B cell (primary cell): ENCODE measurements at regions of chr1 and their contacts with region 1.

Region 1: DNA sequence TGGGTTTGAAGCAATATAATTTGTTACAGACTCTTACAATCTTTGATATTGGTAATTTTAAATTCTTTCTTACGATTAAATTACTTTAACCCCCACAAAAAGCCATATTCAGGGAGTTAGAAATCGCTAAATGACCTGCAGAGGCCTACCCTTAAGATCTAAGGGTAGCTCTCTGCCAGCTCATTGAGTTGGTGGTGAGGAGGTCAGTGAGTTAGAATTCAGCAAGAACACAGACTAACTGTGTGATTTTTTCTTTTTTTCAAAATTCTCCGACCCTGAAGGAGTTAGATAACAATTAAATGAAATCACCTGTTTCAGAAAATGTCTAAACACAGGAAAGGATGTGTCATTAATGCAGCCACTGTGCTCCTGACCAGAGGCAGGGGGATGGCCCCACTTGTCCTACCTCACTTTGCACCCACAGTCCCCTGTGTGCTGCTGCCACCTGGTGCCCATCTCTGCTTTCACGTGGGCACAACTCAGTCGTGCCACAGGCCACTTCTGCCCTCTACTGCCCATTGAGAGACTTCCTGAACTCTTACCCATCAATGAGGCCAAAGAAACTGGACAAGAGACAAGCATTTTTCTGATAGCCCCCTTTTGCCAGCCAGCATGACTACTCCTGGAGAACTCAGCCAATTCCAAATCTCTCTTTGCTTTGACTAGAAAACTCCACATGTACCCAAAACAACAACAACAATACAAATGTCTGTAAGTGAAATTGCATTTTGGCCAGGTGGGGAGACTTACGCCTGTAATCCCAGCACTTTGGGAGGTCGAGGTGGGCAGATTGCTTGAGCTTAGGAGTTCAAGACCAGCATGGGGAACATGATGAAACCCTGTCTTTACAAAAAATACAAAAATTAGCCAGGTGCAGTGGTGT is 8.4 kb downstream of the CFAP45 start:
- DNase-seq: peak; percentile 81
- ATAC-seq: peak; percentile 86
- H3K4me3 ChIP-seq: no peak overlapping the region
- H3K4me3 Mint-ChIP-seq: no peak overlapping the region
- H3K27ac ChIP-seq: no peak overlapping the region
- H3K27ac Mint-ChIP-seq: peak overlapping the region; percentile 70
- H3K4me1 ChIP-seq: peaks cover 18 to 19% of the 10 kb centered on the region in 2 donors
- H3K4me1 Mint-ChIP-seq: peaks cover 26% of the 10 kb centered on the region
- H3K27me3 ChIP-seq: peaks cover 0 to 6% (median 0%) of the 10 kb centered on the region in 4 experiments
- H3K27me3 Mint-ChIP-seq: peaks cover 6% of the 10 kb centered on the region
- CTCF ChIP-seq: peak; percentile 78

Region 2: DNA sequence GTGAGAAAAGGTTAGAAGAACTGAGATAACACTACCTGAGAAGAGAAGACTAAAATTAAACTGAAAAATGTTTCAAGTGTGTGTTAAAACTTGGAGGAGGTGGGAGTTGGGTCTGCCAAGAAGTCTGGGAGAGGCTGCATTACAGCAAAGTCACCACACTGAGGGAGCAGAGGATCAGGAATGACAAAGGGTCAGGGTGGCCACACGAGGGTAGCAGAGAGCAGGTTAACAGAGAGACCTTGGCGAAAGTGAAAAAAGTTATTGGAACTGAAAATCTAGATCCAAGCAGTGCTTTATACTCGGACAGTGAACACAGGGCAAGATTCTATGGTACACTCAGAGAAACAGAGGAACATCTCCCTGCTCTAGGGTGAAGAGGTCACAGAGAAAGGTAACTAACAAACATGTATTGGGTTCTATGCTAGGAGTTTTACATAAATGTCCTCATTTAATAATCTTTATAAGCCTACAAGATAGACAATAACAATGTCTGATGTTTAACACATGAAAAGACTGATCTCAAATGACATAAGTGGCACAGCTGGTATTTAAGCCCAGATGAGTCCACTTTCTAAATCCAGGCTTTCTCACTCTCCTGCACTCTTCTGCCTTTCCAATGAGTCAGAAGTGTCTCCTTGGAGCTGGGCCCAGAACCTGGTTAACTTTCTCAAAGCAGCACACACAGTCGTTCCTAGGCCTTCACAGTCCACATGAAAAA is 730.4 kb before region 1 on chr1:
- CTCF ChIA-PET with region 1: interaction called, 4 read pairs
- POLR2A ChIA-PET with region 1: no interaction called
- intact Hi-C with region 1: loop called (anchors 2 kb)
- DNase-seq: peak; percentile 82
- ATAC-seq: peak; percentile 98
- H3K4me3 ChIP-seq: no peak overlapping the region
- H3K4me3 Mint-ChIP-seq: no peak overlapping the region
- H3K27ac ChIP-seq: no peak overlapping the region
- H3K27ac Mint-ChIP-seq: no peak overlapping the region
- H3K4me1 ChIP-seq: peaks cover 4 to 6% of the 10 kb centered on the region in 2 donors
- H3K4me1 Mint-ChIP-seq: peaks cover 7% of the 10 kb centered on the region
- H3K27me3 ChIP-seq: no peaks in the 10 kb centered on the region
- H3K27me3 Mint-ChIP-seq: no peaks in the 10 kb centered on the region
- CTCF ChIP-seq: peak; percentile 96

Region 3: GRCh38 chr1:159780583-159781582 is 110.6 kb before region 1 on chr1 and contains the start of gene DUSP23:
- CTCF ChIA-PET with region 1: interaction called, 10 read pairs
- POLR2A ChIA-PET with region 1: interaction called, 6 read pairs
- intact Hi-C with region 1: loop called (anchors 1 kb)
- DNase-seq: peak; percentile 96
- ATAC-seq: peak; percentile 97
- H3K4me3 ChIP-seq: peak within 1 kb of the TSS; percentile 65 to 74 (median 71)
- H3K4me3 Mint-ChIP-seq: peak within 1 kb of the TSS; percentile 92
- H3K27ac ChIP-seq: peak within 1 kb of the TSS in 1 of 2 donors; percentile 53
- H3K27ac Mint-ChIP-seq: peak within 1 kb of the TSS; percentile 90
- H3K4me1 ChIP-seq: peaks cover 13 to 15% of the 10 kb centered on the region in 2 donors
- H3K4me1 Mint-ChIP-seq: peaks cover 9% of the 10 kb centered on the region
- H3K27me3 ChIP-seq: peaks cover 0 to 4% (median 0%) of the 10 kb centered on the region in 4 experiments
- H3K27me3 Mint-ChIP-seq: peaks cover 2% of the 10 kb centered on the region
- CTCF ChIP-seq: peak; percentile 78
- total RNA-seq, gene DUSP23: 9.5 and 9.6 TPM in 2 replicates

Region 4: GRCh38 chr1:159804924-159805323 is 86.6 kb before region 1 on chr1:
- CTCF ChIA-PET with region 1: interaction called, 211 read pairs
- POLR2A ChIA-PET with region 1: no interaction called
- intact Hi-C with region 1: no loop called
- DNase-seq: no peak
- ATAC-seq: no peak
- H3K4me3 ChIP-seq: no peak overlapping the region
- H3K4me3 Mint-ChIP-seq: no peak overlapping the region
- H3K27ac ChIP-seq: no peak overlapping the region
- H3K27ac Mint-ChIP-seq: no peak overlapping the region
- H3K4me1 ChIP-seq: peaks cover 0 to 6% of the 10 kb centered on the region in 2 donors
- H3K4me1 Mint-ChIP-seq: peaks cover 7% of the 10 kb centered on the region
- H3K27me3 ChIP-seq: peaks cover 0 to 31% (median 15%) of the 10 kb centered on the region in 4 experiments
- H3K27me3 Mint-ChIP-seq: peaks cover 75% of the 10 kb centered on the region
- CTCF ChIP-seq: no peak

Region 5: GRCh38 chr1:159854693-159855192 is 36.8 kb before region 1 on chr1:
- CTCF ChIA-PET with region 1: interaction called, 5 read pairs
- POLR2A ChIA-PET with region 1: no interaction called
- intact Hi-C with region 1: loop called (anchors 2 kb)
- DNase-seq: peak; percentile 75
- ATAC-seq: peak; percentile 93
- H3K4me3 ChIP-seq: peak overlapping the region in 4 of 5 experiments; percentile 38 to 64 (median 56)
- H3K4me3 Mint-ChIP-seq: peak overlapping the region; percentile 70
- H3K27ac ChIP-seq: peak overlapping the region in 1 of 2 donors; percentile 20
- H3K27ac Mint-ChIP-seq: no peak overlapping the region
- H3K4me1 ChIP-seq: peaks cover 5 to 13% of the 10 kb centered on the region in 2 donors
- H3K4me1 Mint-ChIP-seq: peaks cover 12% of the 10 kb centered on the region
- H3K27me3 ChIP-seq: peaks cover 0 to 21% (median 2%) of the 10 kb centered on the region in 4 experiments
- H3K27me3 Mint-ChIP-seq: peaks cover 4% of the 10 kb centered on the region
- CTCF ChIP-seq: no peak

Region 6: GRCh38 chr1:159924981-159925712 is 33.6 kb after region 1 on chr1 and contains the start of gene TAGLN2:
- CTCF ChIA-PET with region 1: interaction called, 81 read pairs
- POLR2A ChIA-PET with region 1: interaction called, 7 read pairs
- intact Hi-C with region 1: loop called (anchors 2 kb)
- DNase-seq: peak; percentile 93
- ATAC-seq: peak; percentile 65
- H3K4me3 ChIP-seq: peak within 1 kb of the TSS; percentile 81 to 100 (median 99)
- H3K4me3 Mint-ChIP-seq: peak within 1 kb of the TSS; percentile 96
- H3K27ac ChIP-seq: peak within 1 kb of the TSS; percentile 98 to 100
- H3K27ac Mint-ChIP-seq: peak within 1 kb of the TSS; percentile 99
- H3K4me1 ChIP-seq: peaks cover 40 to 45% of the 10 kb centered on the region in 2 donors
- H3K4me1 Mint-ChIP-seq: peaks cover 50% of the 10 kb centered on the region
- H3K27me3 ChIP-seq: no peaks in the 10 kb centered on the region
- H3K27me3 Mint-ChIP-seq: no peaks in the 10 kb centered on the region
- CTCF ChIP-seq: no peak
- total RNA-seq, gene TAGLN2: 342 and 354 TPM in 2 replicates

Region 7: GRCh38 chr1:159945483-159946241 is 54.1 kb after region 1 on chr1 and contains the start of gene IGSF9:
- CTCF ChIA-PET with region 1: interaction called, 14 read pairs
- POLR2A ChIA-PET with region 1: no interaction called
- intact Hi-C with region 1: no loop called
- DNase-seq: peak; percentile 81
- ATAC-seq: peak; percentile 94
- H3K4me3 ChIP-seq: peak within 1 kb of the TSS in 4 of 5 experiments; percentile 8 to 46 (median 42)
- H3K4me3 Mint-ChIP-seq: peak within 1 kb of the TSS; percentile 60
- H3K27ac ChIP-seq: no peak within 1 kb of the TSS
- H3K27ac Mint-ChIP-seq: no peak within 1 kb of the TSS
- H3K4me1 ChIP-seq: peaks cover 15 to 18% of the 10 kb centered on the region in 2 donors
- H3K4me1 Mint-ChIP-seq: peaks cover 15% of the 10 kb centered on the region
- H3K27me3 ChIP-seq: peaks cover 0 to 34% (median 18%) of the 10 kb centered on the region in 4 experiments
- H3K27me3 Mint-ChIP-seq: peaks cover 40% of the 10 kb centered on the region
- CTCF ChIP-seq: peak; percentile 45
- total RNA-seq, gene IGSF9: 0.15 and 0.37 TPM in 2 replicates